ENCODE measurements at regions of chr6 and their contacts with region 1.

Region 1: GRCh38 chr6:89242574-89243330 is 25.6 kb upstream of the GABRR1 start:
- DNase-seq: peak; percentile 66
- H3K27ac ChIP-seq: no peak overlapping the region
- CTCF ChIP-seq: peak; percentile 63

Region 2: GRCh38 chr6:89122625-89123024 is 120.1 kb before region 1 on chr6:
- CTCF ChIA-PET with region 1: interaction called, 11 read pairs
- POLR2A ChIA-PET with region 1: no interaction called
- DNase-seq: peak; percentile 36
- H3K27ac ChIP-seq: no peak overlapping the region
- CTCF ChIP-seq: peak; percentile 67

Region 3: GRCh38 chr6:89311853-89312531 is 69.2 kb after region 1 on chr6:
- CTCF ChIA-PET with region 1: no interaction called
- POLR2A ChIA-PET with region 1: no interaction called
- DNase-seq: peak; percentile 31
- H3K27ac ChIP-seq: no peak overlapping the region
- CTCF ChIP-seq: peak; percentile 58

Region 4: DNA sequence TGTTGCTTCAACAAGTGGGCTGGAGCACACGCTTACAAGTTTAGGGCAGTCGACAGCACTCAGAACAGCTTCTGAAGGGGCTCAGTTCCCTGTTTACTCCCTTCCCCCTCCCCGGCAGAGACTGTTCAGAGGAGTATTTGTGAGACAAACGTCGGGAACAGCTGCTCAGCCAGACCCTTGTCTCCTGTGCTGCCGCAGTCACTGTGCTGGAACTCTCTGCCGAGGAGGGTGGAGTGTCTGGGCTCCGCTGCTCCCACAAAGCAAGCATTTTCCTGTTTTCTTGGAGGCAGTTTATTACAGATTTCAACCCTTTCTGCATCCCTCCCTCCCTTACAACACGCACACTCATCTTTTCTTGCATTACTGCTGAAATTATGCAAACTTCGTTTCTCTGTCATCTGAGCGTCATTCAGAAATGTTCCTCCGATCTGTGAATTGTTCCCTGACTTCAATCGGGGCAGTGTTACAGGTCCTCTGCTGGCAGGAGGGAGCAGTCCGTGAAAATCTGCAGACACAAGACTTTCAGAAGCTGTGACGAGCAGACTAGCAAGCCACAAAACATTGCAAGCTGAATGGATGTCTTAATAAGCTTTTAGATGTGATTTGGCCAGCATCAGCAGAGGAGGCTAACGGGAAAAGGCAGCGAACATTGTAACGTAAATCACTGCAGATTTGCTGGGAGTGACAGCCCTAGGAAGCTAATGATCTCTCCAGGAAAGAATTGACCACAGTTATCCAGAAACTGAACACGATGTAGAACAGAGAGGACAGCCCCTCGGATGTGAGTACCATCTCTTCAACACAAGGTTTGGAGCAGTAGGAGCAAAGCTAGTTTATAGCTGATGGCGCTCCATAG is 319.6 kb after region 1 on chr6:
- CTCF ChIA-PET with region 1: no interaction called
- POLR2A ChIA-PET with region 1: no interaction called
- DNase-seq: no peak
- H3K27ac ChIP-seq: no peak overlapping the region
- CTCF ChIP-seq: no peak